Adrenal gland (tissue), 19 donors: ENCODE measurements at regions of chr10 and their contacts with region 1.

Region 1: GRCh38 chr10:84375011-84375410 is 46.6 kb downstream of the CCSER2 start:
- DNase-seq: peak in 5 of 7 donors; percentile 26 to 60 (median 42)
- H3K4me3 ChIP-seq: no peak overlapping the region
- H3K27ac ChIP-seq: no peak overlapping the region
- H3K4me1 ChIP-seq: no peaks in the 10 kb centered on the region
- H3K27me3 ChIP-seq: no peaks in the 10 kb centered on the region
- CTCF ChIP-seq: peak; percentile 50 to 74 (median 65)
- POLR2A ChIP-seq: no peak

Region 2: DNA sequence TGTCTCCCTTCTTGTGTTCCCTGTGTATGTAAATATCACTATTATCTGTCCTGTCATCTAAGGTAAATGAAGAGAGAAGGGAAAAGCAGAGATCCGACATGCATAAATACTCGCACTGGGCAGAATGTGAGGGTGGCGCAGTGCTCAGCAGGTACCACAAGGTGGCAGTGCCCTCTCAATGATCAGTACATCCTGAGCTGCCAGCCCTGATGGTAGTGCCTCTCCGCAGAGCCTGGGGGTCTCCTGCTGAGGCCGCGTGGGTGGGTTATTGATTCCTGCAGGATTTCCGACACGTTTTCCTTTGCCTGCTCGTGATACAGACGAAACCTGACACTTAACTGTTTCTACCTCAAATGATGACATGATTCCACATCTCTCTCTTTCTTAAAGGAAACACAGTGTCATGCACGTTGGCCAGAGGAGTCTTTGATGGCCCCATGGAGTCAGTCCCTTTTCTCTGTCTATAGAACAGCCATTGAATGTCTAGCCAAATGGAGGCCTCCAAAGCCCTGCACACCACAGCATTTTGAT is 110.3 kb before region 1 on chr10:
- intact Hi-C with region 1: loop called in 1 of 2 experiments (anchors 10 kb)
- DNase-seq: peak; percentile 48 to 90 (median 74)
- H3K4me3 ChIP-seq: no peak overlapping the region
- H3K27ac ChIP-seq: no peak overlapping the region
- H3K4me1 ChIP-seq: no peaks in the 10 kb centered on the region
- H3K27me3 ChIP-seq: no peaks in the 10 kb centered on the region
- CTCF ChIP-seq: peak; percentile 77 to 94 (median 92)
- POLR2A ChIP-seq: no peak